HepG2 (cell line): ENCODE measurements at regions of chr16 and their contacts with region 1.

Region 1: GRCh38 chr16:83113317-83113716 is 486.5 kb downstream of the CDH13 start:
- DNase-seq: peak; percentile 10
- ATAC-seq: peak; percentile 83
- H3K4me3 ChIP-seq: no peak overlapping the region
- H3K27ac ChIP-seq: no peak overlapping the region
- H3K4me1 ChIP-seq: no peaks in the 10 kb centered on the region
- H3K27me3 ChIP-seq: peaks cover 0 to 10% of the 10 kb centered on the region in 2 experiments; a peak in 2 of 5 replicates
- CTCF ChIP-seq: peak; percentile 55
- EP300 ChIP-seq: no peak
- POLR2A ChIP-seq: no peak
- RAD21 ChIP-seq: 0 out of 2 replicates have a peak, but pooled peaks have one; percentile 16

Region 2: GRCh38 chr16:83215406-83216001 is 102.2 kb after region 1 on chr16:
- CTCF ChIA-PET with region 1: interaction called, 14 read pairs
- POLR2A ChIA-PET with region 1: no interaction called
- in situ Hi-C with region 1: loop called (anchors 5 kb)
- intact Hi-C with region 1: no loop called
- DNase-seq: peak; percentile 21
- ATAC-seq: peak; percentile 83
- H3K4me3 ChIP-seq: no peak overlapping the region
- H3K27ac ChIP-seq: no peak overlapping the region
- H3K4me1 ChIP-seq: no peaks in the 10 kb centered on the region
- H3K27me3 ChIP-seq: no peaks in the 10 kb centered on the region
- CTCF ChIP-seq: peak; percentile 85
- EP300 ChIP-seq: no peak
- POLR2A ChIP-seq: no peak
- RAD21 ChIP-seq: no peak

Region 3: DNA sequence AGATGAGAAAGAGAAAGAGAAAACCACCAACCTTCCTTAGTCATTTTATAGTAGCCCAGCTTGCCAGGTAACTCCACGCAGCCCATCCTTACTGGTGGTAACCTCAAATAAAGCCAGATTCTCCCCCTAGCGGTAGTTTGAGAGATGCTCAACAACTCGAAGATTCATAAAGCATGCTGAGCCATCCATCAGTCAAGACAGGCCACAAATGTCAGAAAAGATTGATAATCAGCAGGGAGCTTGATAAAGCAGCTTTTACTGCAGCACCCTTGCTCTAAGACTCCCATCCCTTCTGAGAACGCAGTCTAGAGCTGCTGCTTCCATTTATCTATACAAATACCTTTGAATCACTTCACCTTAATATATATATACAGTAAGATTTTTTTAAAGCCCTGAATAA is 242.9 kb after region 1 on chr16:
- CTCF ChIA-PET with region 1: no interaction called
- POLR2A ChIA-PET with region 1: no interaction called
- in situ Hi-C with region 1: no loop called
- intact Hi-C with region 1: loop called (anchors 2 kb)
- DNase-seq: peak; percentile 56
- ATAC-seq: peak; percentile 91
- H3K4me3 ChIP-seq: no peak overlapping the region
- H3K27ac ChIP-seq: no peak overlapping the region
- H3K4me1 ChIP-seq: no peaks in the 10 kb centered on the region
- H3K27me3 ChIP-seq: no peaks in the 10 kb centered on the region
- CTCF ChIP-seq: peak; percentile 68
- EP300 ChIP-seq: no peak
- POLR2A ChIP-seq: no peak
- RAD21 ChIP-seq: no peak

Region 4: GRCh38 chr16:83447560-83447959 is 334.2 kb after region 1 on chr16:
- CTCF ChIA-PET with region 1: no interaction called
- POLR2A ChIA-PET with region 1: no interaction called
- in situ Hi-C with region 1: no loop called
- intact Hi-C with region 1: loop called (anchors 2 kb)
- DNase-seq: no peak
- ATAC-seq: no peak
- H3K4me3 ChIP-seq: no peak overlapping the region
- H3K27ac ChIP-seq: no peak overlapping the region
- H3K4me1 ChIP-seq: no peaks in the 10 kb centered on the region
- H3K27me3 ChIP-seq: peaks cover 0 to 10% of the 10 kb centered on the region in 2 experiments; a peak in 2 of 5 replicates
- CTCF ChIP-seq: no peak
- EP300 ChIP-seq: no peak
- POLR2A ChIP-seq: no peak
- RAD21 ChIP-seq: no peak